Mammary epithelial cell (primary cell): ENCODE measurements at regions of chr5 and their contacts with region 1.

Region 1: DNA sequence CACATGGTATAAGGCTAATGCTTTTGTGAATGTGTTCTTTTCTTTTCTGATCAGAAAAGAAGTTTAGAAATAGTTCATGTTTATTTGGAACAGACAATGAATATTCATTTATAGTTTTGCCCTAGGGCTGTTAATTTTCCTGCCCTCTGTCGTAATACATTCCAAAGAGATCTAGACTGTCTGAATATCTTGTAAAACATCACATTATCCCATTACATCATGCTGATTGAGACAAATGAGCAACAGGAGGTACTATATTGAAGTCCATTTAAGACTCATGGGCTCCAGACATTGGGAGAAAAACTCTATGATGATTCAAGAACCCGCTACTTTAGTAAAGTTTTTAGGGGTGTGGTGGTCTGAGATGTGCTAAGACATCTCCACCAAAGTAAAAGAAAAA is 121.2 kb upstream of the MAP1B start:
- DNase-seq: no peak
- H3K4me3 ChIP-seq: no peak overlapping the region
- H3K27ac ChIP-seq: no peak overlapping the region
- H3K4me1 ChIP-seq: no peaks in the 10 kb centered on the region
- H3K27me3 ChIP-seq: no peaks in the 10 kb centered on the region
- CTCF ChIP-seq: no peak

Region 2: DNA sequence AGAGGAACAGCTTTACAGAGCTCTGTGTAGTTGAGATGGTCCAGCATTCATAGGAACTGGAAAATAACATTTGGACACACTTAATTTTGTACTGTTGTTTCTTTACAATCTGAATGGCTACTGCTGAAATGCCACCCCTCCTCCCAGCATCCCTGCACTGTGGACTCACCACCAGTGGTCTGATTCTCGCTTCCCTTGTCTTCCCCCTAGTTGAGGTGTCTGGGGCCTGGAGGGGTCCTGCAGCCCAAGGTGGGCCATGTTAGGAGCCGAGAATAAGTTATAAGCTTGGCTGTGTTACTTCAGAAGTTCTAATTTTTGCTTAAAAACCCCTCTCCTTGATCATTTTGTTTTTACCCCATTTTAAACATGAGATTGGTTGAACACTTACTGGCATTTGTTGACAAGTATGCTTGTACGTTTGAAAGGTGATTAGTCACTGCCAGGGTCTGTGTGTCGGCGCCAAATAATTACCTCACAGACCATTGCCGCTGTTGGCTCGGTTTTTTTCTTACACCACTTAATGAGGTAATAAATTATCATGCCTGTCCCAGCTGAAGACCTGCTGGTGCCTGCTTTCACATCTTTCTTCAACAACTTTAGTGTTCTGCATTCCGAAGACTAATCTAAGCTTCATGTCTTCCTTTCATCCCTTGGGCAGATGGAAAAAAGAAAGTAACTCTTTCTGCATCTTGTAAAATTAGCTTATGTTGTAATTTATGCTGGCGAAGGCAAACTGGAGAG is 333.1 kb before region 1 on chr5:
- CTCF ChIA-PET with region 1: no interaction called
- dilution Hi-C with region 1: no loop called
- in situ Hi-C with region 1: no loop called
- intact Hi-C with region 1: no loop called
- DNase-seq: no peak
- H3K4me3 ChIP-seq: no peak overlapping the region
- H3K27ac ChIP-seq: no peak overlapping the region
- H3K4me1 ChIP-seq: no peaks in the 10 kb centered on the region
- H3K27me3 ChIP-seq: no peaks in the 10 kb centered on the region
- CTCF ChIP-seq: no peak

Region 3: DNA sequence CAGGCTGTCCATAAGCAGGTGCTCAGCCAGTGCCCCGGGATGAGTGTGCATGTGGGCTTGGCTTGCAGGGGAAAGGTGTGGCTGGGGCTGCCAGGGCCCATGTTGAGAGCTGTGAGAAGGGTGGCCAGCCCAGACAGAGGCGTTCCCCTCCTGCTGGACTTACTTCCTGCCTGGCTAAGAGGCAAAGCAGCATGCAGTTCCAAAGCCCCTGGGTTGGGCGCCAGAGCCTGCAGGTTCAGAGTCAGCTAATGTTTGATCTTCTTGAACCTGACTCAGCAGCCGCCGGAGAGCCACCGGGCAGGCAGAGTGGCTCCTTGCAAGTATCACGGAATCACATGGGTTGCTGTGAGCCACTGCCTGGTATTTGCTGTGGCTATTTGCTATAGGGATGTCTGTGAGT is 47.2 kb before region 1 on chr5:
- CTCF ChIA-PET with region 1: no interaction called
- dilution Hi-C with region 1: loop called (anchors 5 kb)
- in situ Hi-C with region 1: no loop called
- intact Hi-C with region 1: no loop called
- DNase-seq: peak; percentile 23
- H3K4me3 ChIP-seq: no peak overlapping the region
- H3K27ac ChIP-seq: no peak overlapping the region
- H3K4me1 ChIP-seq: no peaks in the 10 kb centered on the region
- H3K27me3 ChIP-seq: no peaks in the 10 kb centered on the region
- CTCF ChIP-seq: no peak

Region 4: GRCh38 chr5:72005671-72006070 is 19.6 kb after region 1 on chr5:
- CTCF ChIA-PET with region 1: no interaction called
- dilution Hi-C with region 1: no loop called
- in situ Hi-C with region 1: no loop called
- intact Hi-C with region 1: no loop called
- DNase-seq: no peak
- H3K4me3 ChIP-seq: no peak overlapping the region
- H3K27ac ChIP-seq: no peak overlapping the region
- H3K4me1 ChIP-seq: no peaks in the 10 kb centered on the region
- H3K27me3 ChIP-seq: no peaks in the 10 kb centered on the region
- CTCF ChIP-seq: no peak